Naive thymus-derived CD4-positive, alpha-beta T cell (primary cell): ENCODE measurements at regions of chr20 and their contacts with region 1.

Region 1: GRCh38 chr20:32652739-32653526 is 20.8 kb downstream of the C20orf203 start:
- DNase-seq: peak; percentile 77 to 92 (median 86)
- ATAC-seq: peak; percentile 97
- H3K4me3 ChIP-seq: no peak overlapping the region
- H3K4me3 Mint-ChIP-seq: peak overlapping the region in 9 of 10 donors; percentile 26 to 65 (median 57)
- H3K27ac ChIP-seq: no peak overlapping the region
- H3K27ac Mint-ChIP-seq: peak overlapping the region in 4 of 9 donors; percentile 15 to 59 (median 32)
- H3K4me1 ChIP-seq: peaks cover 5 to 6% of the 10 kb centered on the region in 2 donors
- H3K4me1 Mint-ChIP-seq: peaks cover 0 to 14% (median 12%) of the 10 kb centered on the region in 7 donors
- H3K27me3 ChIP-seq: no peaks in the 10 kb centered on the region
- H3K27me3 Mint-ChIP-seq: peaks cover 0 to 4% (median 0%) of the 10 kb centered on the region in 5 donors

Region 2: DNA sequence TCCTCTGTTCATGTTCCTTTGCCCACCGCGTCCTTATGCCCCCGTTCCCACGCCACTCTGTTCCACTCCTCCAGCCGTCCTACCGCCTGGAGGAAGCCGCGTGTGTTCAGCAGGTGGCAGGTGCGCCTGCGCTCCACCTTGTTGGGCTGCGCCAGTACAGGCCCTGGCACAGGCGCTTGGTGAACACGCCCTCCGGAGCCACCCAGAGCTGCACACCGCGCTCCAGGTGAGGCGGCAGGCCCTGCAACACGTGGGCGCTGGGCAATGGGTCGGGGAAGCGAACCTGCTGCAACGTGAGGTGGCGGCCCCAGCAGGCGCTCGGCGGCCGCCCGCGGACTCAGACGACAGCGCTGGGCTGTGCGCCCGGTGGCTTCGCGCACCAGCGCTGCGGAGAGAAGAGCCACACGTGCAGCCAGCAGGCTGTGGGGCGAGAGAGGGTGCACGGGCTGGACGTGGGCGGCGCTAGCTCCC is 803.4 kb before region 1 on chr20:
- CTCF ChIA-PET with region 1: no interaction called
- POLR2A ChIA-PET with region 1: no interaction called
- intact Hi-C with region 1: loop called (anchors 2 kb)
- DNase-seq: no peak
- ATAC-seq: no peak
- H3K4me3 ChIP-seq: no peak overlapping the region
- H3K4me3 Mint-ChIP-seq: no peak overlapping the region
- H3K27ac ChIP-seq: no peak overlapping the region
- H3K27ac Mint-ChIP-seq: no peak overlapping the region
- H3K4me1 ChIP-seq: no peaks in the 10 kb centered on the region
- H3K4me1 Mint-ChIP-seq: no peaks in the 10 kb centered on the region
- H3K27me3 ChIP-seq: no peaks in the 10 kb centered on the region
- H3K27me3 Mint-ChIP-seq: peaks cover 15 to 32% (median 18%) of the 10 kb centered on the region in 5 donors

Region 3: GRCh38 chr20:32240220-32240619 is 412.7 kb before region 1 on chr20:
- CTCF ChIA-PET with region 1: no interaction called
- POLR2A ChIA-PET with region 1: no interaction called
- intact Hi-C with region 1: loop called in 1 of 2 experiments (anchors 2 kb)
- DNase-seq: no peak
- ATAC-seq: no peak
- H3K4me3 ChIP-seq: no peak overlapping the region
- H3K4me3 Mint-ChIP-seq: no peak overlapping the region
- H3K27ac ChIP-seq: no peak overlapping the region
- H3K27ac Mint-ChIP-seq: no peak overlapping the region
- H3K4me1 ChIP-seq: no peaks in the 10 kb centered on the region
- H3K4me1 Mint-ChIP-seq: peaks cover 0 to 5% (median 0%) of the 10 kb centered on the region in 7 donors
- H3K27me3 ChIP-seq: no peaks in the 10 kb centered on the region
- H3K27me3 Mint-ChIP-seq: no peaks in the 10 kb centered on the region

Region 4: GRCh38 chr20:32437391-32438074 is 215.4 kb before region 1 on chr20:
- CTCF ChIA-PET with region 1: interaction called, 4 read pairs
- POLR2A ChIA-PET with region 1: no interaction called
- intact Hi-C with region 1: loop called in 1 of 2 experiments (anchors 1 kb)
- DNase-seq: no peak
- ATAC-seq: peak; percentile 36
- H3K4me3 ChIP-seq: no peak overlapping the region
- H3K4me3 Mint-ChIP-seq: no peak overlapping the region
- H3K27ac ChIP-seq: no peak overlapping the region
- H3K27ac Mint-ChIP-seq: peak overlapping the region in 6 of 9 donors; percentile 7 to 48 (median 28)
- H3K4me1 ChIP-seq: no peaks in the 10 kb centered on the region
- H3K4me1 Mint-ChIP-seq: peaks cover 0 to 19% (median 9%) of the 10 kb centered on the region in 7 donors
- H3K27me3 ChIP-seq: no peaks in the 10 kb centered on the region
- H3K27me3 Mint-ChIP-seq: no peaks in the 10 kb centered on the region

Region 5: GRCh38 chr20:32516583-32517517 is 136.1 kb before region 1 on chr20:
- CTCF ChIA-PET with region 1: interaction called, 169 read pairs
- POLR2A ChIA-PET with region 1: interaction called, 60 read pairs
- intact Hi-C with region 1: loop called (anchors 1 kb)
- DNase-seq: no peak
- ATAC-seq: no peak
- H3K4me3 ChIP-seq: no peak overlapping the region
- H3K4me3 Mint-ChIP-seq: peak overlapping the region in 7 of 10 donors; percentile 0 to 93 (median 29)
- H3K27ac ChIP-seq: peak overlapping the region; percentile 33
- H3K27ac Mint-ChIP-seq: peak overlapping the region in 8 of 9 donors; percentile 90 to 98 (median 96)
- H3K4me1 ChIP-seq: peaks cover 16 to 58% of the 10 kb centered on the region in 2 donors
- H3K4me1 Mint-ChIP-seq: peaks cover 24 to 78% (median 67%) of the 10 kb centered on the region in 7 donors
- H3K27me3 ChIP-seq: no peaks in the 10 kb centered on the region
- H3K27me3 Mint-ChIP-seq: no peaks in the 10 kb centered on the region

Region 6: GRCh38 chr20:32585011-32585518 is 67.9 kb before region 1 on chr20 and contains the start of gene NOL4L:
- CTCF ChIA-PET with region 1: interaction called, 4 read pairs
- POLR2A ChIA-PET with region 1: interaction called, 3 read pairs
- intact Hi-C with region 1: loop called in 1 of 2 experiments (anchors 1 kb)
- DNase-seq: peak in 4 of 9 donors; percentile 34 to 59 (median 45)
- ATAC-seq: peak; percentile 30
- H3K4me3 ChIP-seq: peak within 1 kb of the TSS; percentile 78
- H3K4me3 Mint-ChIP-seq: peak within 1 kb of the TSS; percentile 89 to 97 (median 93)
- H3K27ac ChIP-seq: peak within 1 kb of the TSS; percentile 70
- H3K27ac Mint-ChIP-seq: peak within 1 kb of the TSS; percentile 78 to 97 (median 91)
- H3K4me1 ChIP-seq: peaks cover 9 to 37% of the 10 kb centered on the region in 2 donors
- H3K4me1 Mint-ChIP-seq: peaks cover 21 to 48% (median 38%) of the 10 kb centered on the region in 7 donors
- H3K27me3 ChIP-seq: no peaks in the 10 kb centered on the region
- H3K27me3 Mint-ChIP-seq: peaks cover 0 to 28% (median 0%) of the 10 kb centered on the region in 5 donors
- total RNA-seq, gene NOL4L: 29.4 to 81.9 (median 74.6) TPM